Transverse colon (tissue), 4 donors: ENCODE measurements at regions of chr9 and their contacts with region 1.

Region 1: DNA sequence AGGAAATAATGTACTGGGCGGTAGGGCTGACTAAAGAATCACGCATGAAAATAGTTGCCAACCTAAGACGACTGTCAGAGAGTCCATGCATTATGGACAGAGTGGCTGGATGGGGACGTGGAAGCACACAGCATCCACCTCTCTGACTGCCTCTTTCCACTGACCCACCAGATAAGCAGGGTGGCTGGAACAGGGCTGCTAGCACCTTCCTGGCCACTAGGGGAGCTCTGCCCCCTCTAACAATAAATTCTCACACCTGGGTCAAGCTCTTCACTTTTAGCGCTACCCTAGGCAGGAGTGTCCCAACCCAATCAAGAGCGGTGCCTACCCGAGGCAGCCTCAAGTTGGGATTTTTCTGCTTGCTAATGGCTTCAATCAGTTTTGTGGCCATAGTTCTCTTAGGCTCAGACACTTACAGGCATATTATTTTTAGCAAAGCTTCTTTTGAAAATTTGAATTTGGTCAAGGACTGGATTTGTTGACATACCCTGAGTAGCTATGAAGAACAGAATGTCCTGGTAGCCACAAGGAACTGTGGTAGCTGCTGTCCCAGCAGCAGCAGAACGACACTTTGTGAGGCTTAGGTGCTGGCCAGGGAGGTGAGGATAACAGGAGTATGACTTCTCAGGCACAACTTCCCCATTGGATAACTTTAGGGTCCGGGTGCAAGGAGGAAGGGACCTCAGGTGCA is 6.9 kb upstream of the TPM2 start:
- DNase-seq: peak; percentile 77
- H3K4me3 ChIP-seq: no peak overlapping the region
- H3K27ac ChIP-seq: peak overlapping the region; percentile 52 to 95 (median 92)
- H3K4me1 ChIP-seq: peaks cover 0 to 19% (median 13%) of the 10 kb centered on the region in 4 donors
- H3K27me3 ChIP-seq: no peaks in the 10 kb centered on the region
- CTCF ChIP-seq: peak; percentile 84 to 91 (median 88)
- EP300 ChIP-seq: peak; percentile 18
- POLR2A ChIP-seq: no peak

Region 2: DNA sequence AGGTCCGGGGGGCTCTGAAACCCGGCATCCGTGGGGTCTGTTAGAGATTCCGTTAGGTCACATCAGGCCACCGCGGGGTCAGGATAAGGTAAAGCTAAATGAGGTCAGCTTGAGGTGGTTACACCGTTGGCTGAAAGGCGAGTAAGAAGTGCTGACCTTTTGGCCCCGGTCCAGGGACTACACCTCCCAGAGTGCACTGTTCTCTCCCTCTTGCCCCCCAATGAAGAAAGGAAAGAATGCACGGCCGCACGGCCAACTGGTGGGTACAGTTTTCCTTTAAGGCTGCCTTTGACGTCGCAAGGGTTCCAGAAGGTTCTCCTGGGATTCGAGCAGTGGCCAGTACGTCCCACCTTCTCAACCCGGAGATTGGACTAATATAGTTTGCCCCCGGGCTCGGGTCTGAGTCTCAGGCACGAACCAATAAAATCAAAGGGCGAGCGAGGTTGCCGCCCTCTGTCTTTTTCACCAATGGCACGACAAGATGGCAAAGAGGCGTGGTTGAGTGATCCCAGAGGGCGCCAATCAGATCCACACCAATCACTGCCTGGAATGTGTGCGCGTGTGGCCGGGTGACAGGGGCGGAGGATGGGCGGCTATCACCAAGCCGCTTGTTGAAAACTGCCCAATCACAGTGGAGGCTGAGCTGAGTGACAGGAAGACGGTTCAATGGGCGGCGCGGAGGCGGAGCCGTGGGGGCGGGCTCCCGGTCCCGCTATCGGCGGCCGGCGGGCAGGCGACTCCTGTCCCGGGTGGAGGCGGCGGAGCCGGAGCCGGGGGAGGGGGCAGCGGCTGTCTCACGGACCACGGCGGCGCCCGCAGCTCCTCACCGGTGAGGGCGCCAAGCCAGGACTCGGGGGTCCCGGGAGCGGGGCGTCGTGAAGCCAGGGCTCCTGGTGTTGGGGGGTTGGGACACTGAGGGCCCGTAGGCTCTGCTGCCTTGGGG is 707.4 kb before region 1 on chr9 and contains the start of gene DNAJB5:
- in situ Hi-C with region 1: loop called in 1 of 4 experiments (anchors 25 kb)
- intact Hi-C with region 1: no loop called
- DNase-seq: peak; percentile 98
- H3K4me3 ChIP-seq: peak within 1 kb of the TSS; percentile 56 to 97 (median 90)
- H3K27ac ChIP-seq: peak within 1 kb of the TSS; percentile 90 to 96 (median 94)
- H3K4me1 ChIP-seq: peaks cover 22 to 45% (median 39%) of the 10 kb centered on the region in 4 donors
- H3K27me3 ChIP-seq: no peaks in the 10 kb centered on the region
- CTCF ChIP-seq: no peak
- EP300 ChIP-seq: no peak
- POLR2A ChIP-seq: peak; percentile 74
- total RNA-seq, gene DNAJB5: 4.1 to 22.5 (median 10.2) TPM

Region 3: DNA sequence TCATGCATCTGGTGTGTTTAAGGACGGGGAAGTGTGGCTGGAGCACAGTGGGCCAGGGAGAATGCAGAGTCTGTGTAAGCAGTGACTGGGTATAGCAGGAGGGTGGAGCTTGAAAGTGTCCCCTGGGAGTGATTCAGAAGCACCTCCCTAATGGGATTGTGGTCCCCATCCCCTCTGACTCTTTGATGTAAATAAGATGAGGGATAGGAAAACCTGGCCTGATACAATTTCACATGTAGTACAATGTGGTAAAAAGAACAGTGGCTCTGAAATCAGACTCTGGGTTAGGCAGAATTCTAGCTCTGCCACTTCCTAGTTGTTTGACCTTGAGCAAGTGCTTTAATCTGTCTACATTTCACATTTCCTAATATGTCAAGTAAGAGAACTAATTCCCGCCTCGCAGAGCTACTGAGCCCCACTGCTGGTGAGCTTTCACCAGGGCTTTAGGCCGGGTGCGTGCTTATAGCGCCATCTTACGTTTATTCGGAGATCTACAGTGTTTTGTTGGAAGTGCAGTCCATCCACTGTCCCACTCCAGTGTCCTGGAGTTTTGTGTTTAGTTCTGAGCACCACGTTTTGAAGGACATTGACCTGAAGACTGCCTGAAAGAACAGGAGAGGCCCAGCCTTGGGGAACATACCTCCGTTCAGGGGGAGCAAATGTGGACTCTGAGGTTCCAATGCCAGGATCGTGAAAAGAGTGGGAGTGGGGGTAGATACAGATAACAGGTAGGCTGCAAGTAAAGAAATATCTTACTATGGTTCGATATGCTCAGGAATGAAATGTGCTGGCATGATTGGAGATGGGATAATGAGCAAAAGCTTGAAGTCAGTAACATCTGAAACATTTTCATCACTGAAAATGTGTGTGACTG is 142.8 kb before region 1 on chr9:
- in situ Hi-C with region 1: no loop called
- intact Hi-C with region 1: no loop called
- DNase-seq: peak; percentile 64
- H3K4me3 ChIP-seq: no peak overlapping the region
- H3K27ac ChIP-seq: peak overlapping the region; percentile 42 to 79 (median 75)
- H3K4me1 ChIP-seq: peaks cover 0 to 11% (median 7%) of the 10 kb centered on the region in 4 donors
- H3K27me3 ChIP-seq: no peaks in the 10 kb centered on the region
- CTCF ChIP-seq: peak; percentile 69 to 83 (median 74)
- EP300 ChIP-seq: no peak
- POLR2A ChIP-seq: no peak

Region 4: GRCh38 chr9:35732122-35732799 is 35.6 kb after region 1 on chr9 and contains the starts of genes CREB3 and TLN1:
- in situ Hi-C with region 1: no loop called
- intact Hi-C with region 1: no loop called
- DNase-seq: peak; percentile 99
- H3K4me3 ChIP-seq: peak within 1 kb of the TSS; percentile 67 to 87 (median 78)
- H3K27ac ChIP-seq: peak within 1 kb of the TSS; percentile 94 to 98 (median 97)
- H3K4me1 ChIP-seq: peaks cover 36 to 68% (median 56%) of the 10 kb centered on the region in 4 donors
- H3K27me3 ChIP-seq: no peaks in the 10 kb centered on the region
- CTCF ChIP-seq: no peak
- EP300 ChIP-seq: no peak
- POLR2A ChIP-seq: peak; percentile 81
- total RNA-seq, gene CREB3: 22.4 to 69.7 (median 45.5) TPM
- total RNA-seq, gene TLN1: 158 to 328 (median 177) TPM

Region 5: DNA sequence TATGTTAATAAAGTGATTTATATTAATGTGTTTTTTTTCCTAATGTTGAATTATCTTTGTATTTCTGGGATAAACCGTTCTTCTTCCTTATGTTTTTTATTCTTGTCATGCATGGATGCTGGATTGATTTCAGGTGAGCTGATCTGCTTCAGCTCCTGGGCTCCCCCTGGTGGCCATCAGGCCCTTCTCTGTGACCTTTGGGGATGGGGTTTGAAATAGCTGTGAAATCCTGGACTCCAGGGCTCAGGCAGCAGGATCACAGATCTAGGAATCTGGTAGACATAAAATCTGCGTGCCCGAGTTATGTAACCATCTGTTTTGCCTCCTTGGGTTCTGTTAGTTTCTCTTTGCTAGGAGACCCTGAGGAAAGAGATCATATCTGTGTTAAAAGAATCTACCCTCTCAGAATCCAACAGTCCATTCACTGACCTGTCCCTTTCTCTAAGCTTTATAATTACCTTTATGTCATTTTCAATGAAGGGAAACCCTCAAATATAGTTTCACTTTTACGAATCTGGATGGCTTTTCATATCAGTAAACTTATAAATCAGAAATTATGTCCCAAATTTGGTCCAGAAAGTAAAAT is 185.7 kb after region 1 on chr9:
- in situ Hi-C with region 1: no loop called
- intact Hi-C with region 1: no loop called
- DNase-seq: peak; percentile 90
- H3K4me3 ChIP-seq: no peak overlapping the region
- H3K27ac ChIP-seq: no peak overlapping the region
- H3K4me1 ChIP-seq: no peaks in the 10 kb centered on the region
- H3K27me3 ChIP-seq: peaks cover 5% of the 10 kb centered on the region
- CTCF ChIP-seq: peak; percentile 92 to 98 (median 97)
- EP300 ChIP-seq: no peak
- POLR2A ChIP-seq: no peak